ENCODE measurements at regions of chr2 and their contacts with region 1.

Region 1: DNA sequence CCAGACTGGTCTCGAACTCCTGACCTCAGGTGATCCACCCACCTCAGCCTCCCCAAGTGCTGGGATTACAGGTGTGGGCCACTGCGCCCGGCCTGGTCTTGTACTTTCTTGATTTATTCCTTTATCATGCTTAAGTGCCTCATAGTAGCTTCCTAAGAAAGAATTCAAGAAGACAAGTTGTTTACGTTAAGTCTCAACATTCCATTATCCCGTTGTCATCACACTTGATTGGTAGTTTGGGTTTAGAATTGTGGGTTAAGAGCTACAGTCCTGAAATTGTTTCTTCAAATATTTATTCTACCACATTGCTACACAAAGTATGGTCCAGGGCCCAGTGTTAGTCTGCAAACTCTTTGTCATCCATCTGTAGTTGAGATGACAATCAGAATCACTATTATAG is 194.0 kb downstream of the VWC2L start:
- DNase-seq: peak in 1 of 2 experiments; percentile 41
- H3K4me3 ChIP-seq: no peak overlapping the region
- H3K27ac ChIP-seq: no peak overlapping the region
- H3K4me1 ChIP-seq: no peaks in the 10 kb centered on the region
- H3K27me3 ChIP-seq: no peaks in the 10 kb centered on the region
- CTCF ChIP-seq: no peak
- EP300 ChIP-seq: no peak
- POLR2A ChIP-seq: no peak
- RAD21 ChIP-seq: no peak

Region 2: GRCh38 chr2:214504599-214505384 is 100.1 kb before region 1 on chr2:
- CTCF ChIA-PET with region 1: no interaction called
- POLR2A ChIA-PET with region 1: no interaction called
- DNase-seq: no peak
- H3K4me3 ChIP-seq: no peak overlapping the region
- H3K27ac ChIP-seq: no peak overlapping the region
- H3K4me1 ChIP-seq: no peaks in the 10 kb centered on the region
- H3K27me3 ChIP-seq: no peaks in the 10 kb centered on the region
- CTCF ChIP-seq: no peak
- EP300 ChIP-seq: no peak
- POLR2A ChIP-seq: no peak
- RAD21 ChIP-seq: no peak

Region 3: GRCh38 chr2:214560176-214560575 is 44.7 kb before region 1 on chr2:
- CTCF ChIA-PET with region 1: no interaction called
- POLR2A ChIA-PET with region 1: no interaction called
- DNase-seq: no peak
- H3K4me3 ChIP-seq: no peak overlapping the region
- H3K27ac ChIP-seq: no peak overlapping the region
- H3K4me1 ChIP-seq: no peaks in the 10 kb centered on the region
- H3K27me3 ChIP-seq: no peaks in the 10 kb centered on the region
- CTCF ChIP-seq: no peak
- EP300 ChIP-seq: no peak
- POLR2A ChIP-seq: no peak
- RAD21 ChIP-seq: no peak

Region 4: GRCh38 chr2:214587442-214587841 is 17.4 kb before region 1 on chr2:
- CTCF ChIA-PET with region 1: interaction called, 12 read pairs
- POLR2A ChIA-PET with region 1: no interaction called
- DNase-seq: peak; percentile 9 to 52
- H3K4me3 ChIP-seq: no peak overlapping the region
- H3K27ac ChIP-seq: no peak overlapping the region
- H3K4me1 ChIP-seq: no peaks in the 10 kb centered on the region
- H3K27me3 ChIP-seq: peaks cover 5 to 11% (median 8%) of the 10 kb centered on the region in 4 experiments
- CTCF ChIP-seq: peak; percentile 61 to 83 (median 81)
- EP300 ChIP-seq: no peak
- POLR2A ChIP-seq: no peak
- RAD21 ChIP-seq: peak; percentile 70 to 72

Measured in H1 (cell line).